ENCODE measurements at regions of chr16 and their contacts with region 1.

Region 1: DNA sequence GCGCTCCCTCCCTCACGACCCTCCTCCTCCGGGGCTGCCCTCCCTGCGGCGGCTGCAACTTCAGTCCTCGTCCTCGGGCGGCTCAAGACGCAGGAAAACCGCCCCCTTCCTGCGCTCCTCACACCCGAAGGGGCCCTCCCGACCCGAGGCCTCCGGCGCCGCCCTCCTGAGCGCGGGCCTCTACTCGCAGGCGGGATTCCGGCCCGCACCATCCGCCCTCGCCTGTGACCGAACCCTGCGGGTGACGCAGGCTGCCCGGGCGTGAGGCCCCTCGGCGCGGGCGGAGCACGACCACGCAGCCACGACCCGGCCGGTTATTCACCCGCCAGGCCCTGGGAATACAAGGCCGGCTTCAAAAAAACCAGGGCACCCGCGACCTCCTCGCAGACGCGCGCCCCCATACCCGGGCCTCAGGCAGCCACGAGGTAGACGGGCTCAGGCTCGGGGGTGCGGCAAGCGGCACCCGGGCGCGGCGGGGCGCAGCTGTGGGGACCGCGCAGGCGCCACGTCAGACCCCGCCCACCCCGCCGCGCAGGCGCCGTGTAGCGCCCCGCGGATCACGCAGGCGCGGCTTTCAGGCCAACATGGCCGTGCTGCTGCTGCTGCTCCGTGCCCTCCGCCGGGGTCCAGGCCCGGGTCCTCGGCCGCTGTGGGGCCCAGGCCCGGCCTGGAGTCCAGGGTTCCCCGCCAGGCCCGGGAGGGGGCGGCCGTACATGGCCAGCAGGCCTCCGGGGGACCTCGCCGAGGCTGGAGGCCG is at the start of gene SPG7:
- DNase-seq: peak; percentile 84 to 87 (median 86)
- ATAC-seq: peak; percentile 90
- H3K4me3 ChIP-seq: peak within 1 kb of the TSS; percentile 85 to 91
- H3K27ac ChIP-seq: peak within 1 kb of the TSS; percentile 87 to 94 (median 90)
- H3K4me1 ChIP-seq: peaks cover 48% of the 10 kb centered on the region
- H3K27me3 ChIP-seq: no peaks in the 10 kb centered on the region
- CTCF ChIP-seq: no peak
- POLR2A ChIP-seq: peak; percentile 68 to 88 (median 82)
- total RNA-seq, gene SPG7: 107 to 152 TPM

Region 2: GRCh38 chr16:89241187-89242007 is 266.6 kb before region 1 on chr16:
- intact Hi-C with region 1: loop called (anchors 10 kb)
- DNase-seq: peak; percentile 62 to 73 (median 68)
- ATAC-seq: peak; percentile 70
- H3K4me3 ChIP-seq: peak overlapping the region; percentile 26 to 62
- H3K27ac ChIP-seq: peak overlapping the region; percentile 88 to 94 (median 92)
- H3K4me1 ChIP-seq: peaks cover 12% of the 10 kb centered on the region
- H3K27me3 ChIP-seq: no peaks in the 10 kb centered on the region
- CTCF ChIP-seq: no peak
- POLR2A ChIP-seq: peak; percentile 67 to 92 (median 91)